ENCODE measurements at regions of chr21 and their contacts with region 1.

Region 1: GRCh38 chr21:34639882-34640788 is 25.2 kb upstream of the RCAN1 start:
- DNase-seq: peak; percentile 16
- H3K4me3 Mint-ChIP-seq: peak overlapping the region; percentile 73
- H3K27ac Mint-ChIP-seq: peak overlapping the region; percentile 79
- H3K4me1 Mint-ChIP-seq: peaks cover 37% of the 10 kb centered on the region
- H3K27me3 Mint-ChIP-seq: peaks cover 11% of the 10 kb centered on the region

Region 2: GRCh38 chr21:34614633-34615486 is 25.3 kb before region 1 on chr21 and contains the start of gene RCAN1:
- intact Hi-C with region 1: loop called (anchors 2 kb)
- DNase-seq: peak; percentile 86
- H3K4me3 Mint-ChIP-seq: peak within 1 kb of the TSS; percentile 85
- H3K27ac Mint-ChIP-seq: peak within 1 kb of the TSS; percentile 57
- H3K4me1 Mint-ChIP-seq: peaks cover 30% of the 10 kb centered on the region
- H3K27me3 Mint-ChIP-seq: peaks cover 5% of the 10 kb centered on the region
- total RNA-seq, gene RCAN1: 10.7 and 11.1 TPM in 2 replicates

Region 3: GRCh38 chr21:34743831-34744230 is 103.7 kb after region 1 on chr21:
- intact Hi-C with region 1: no loop called
- DNase-seq: no peak
- H3K4me3 Mint-ChIP-seq: no peak overlapping the region
- H3K27ac Mint-ChIP-seq: no peak overlapping the region
- H3K4me1 Mint-ChIP-seq: peaks cover 4% of the 10 kb centered on the region
- H3K27me3 Mint-ChIP-seq: peaks cover 5% of the 10 kb centered on the region